ENCODE measurements at regions of chr4 and their contacts with region 1.

Region 1: GRCh38 chr4:10106421-10107039 is 10.1 kb downstream of the WDR1 start:
- DNase-seq: peak; percentile 80
- H3K4me3 Mint-ChIP-seq: peak overlapping the region; percentile 74
- H3K27ac Mint-ChIP-seq: peak overlapping the region; percentile 89
- H3K4me1 Mint-ChIP-seq: peaks cover 92% of the 10 kb centered on the region
- H3K27me3 Mint-ChIP-seq: no peaks in the 10 kb centered on the region

Region 2: DNA sequence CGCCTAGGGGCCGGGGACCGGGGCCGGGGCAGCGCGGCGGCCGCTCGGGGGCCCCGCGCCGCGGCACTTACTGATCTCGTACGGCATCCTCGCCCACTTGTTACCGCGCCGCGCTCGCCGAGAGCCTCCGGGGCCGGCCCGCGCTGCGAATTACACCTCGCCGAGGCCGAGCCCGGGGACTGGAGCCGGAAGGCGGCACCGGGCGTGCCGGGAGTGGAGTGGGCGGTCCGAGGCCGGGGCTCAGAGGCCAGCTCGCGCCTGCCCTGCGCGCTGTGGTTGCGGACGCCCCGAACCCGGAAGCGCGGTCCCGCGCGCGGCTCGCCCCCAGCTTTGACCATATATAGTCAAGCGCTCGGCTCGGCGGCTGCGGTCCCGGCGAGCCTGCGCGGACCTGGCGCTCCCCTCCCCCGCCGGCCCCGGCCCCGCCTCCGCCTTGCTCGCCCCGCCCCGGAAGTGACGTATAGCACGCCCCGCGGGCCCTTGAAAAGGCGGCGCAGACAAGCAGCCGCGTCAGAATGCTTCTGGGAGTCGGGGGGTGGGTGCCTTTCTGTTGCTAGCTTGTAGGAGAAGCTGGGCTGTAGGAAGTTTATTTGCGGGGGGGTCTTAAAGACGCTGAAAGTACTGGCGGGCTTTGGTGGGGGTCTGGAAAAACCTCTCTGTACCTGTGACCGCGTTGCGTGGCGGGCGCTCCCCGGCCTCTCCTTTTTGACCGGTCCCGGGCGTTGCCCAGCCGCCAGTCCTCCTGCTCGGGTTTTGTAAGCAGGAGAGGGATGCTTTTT is 10.2 kb after region 1 on chr4 and contains the start of gene WDR1:
- intact Hi-C with region 1: loop called (anchors 1 kb)
- DNase-seq: peak; percentile 97
- H3K4me3 Mint-ChIP-seq: peak within 1 kb of the TSS; percentile 98
- H3K27ac Mint-ChIP-seq: peak within 1 kb of the TSS; percentile 95
- H3K4me1 Mint-ChIP-seq: peaks cover 70% of the 10 kb centered on the region
- H3K27me3 Mint-ChIP-seq: no peaks in the 10 kb centered on the region
- total RNA-seq, gene WDR1: 369 and 376 TPM in 2 replicates

Measured in activated CD4-positive, alpha-beta T cell treated with anti-CD3 and anti-CD28 coated beads, Interleukin-2, amount 10 ng/mL, durations not matched to agents 24 days and 14 days (primary cell).